Dorsolateral prefrontal cortex (tissue), 120 donors: ENCODE measurements at regions of chr14 and their contacts with region 1.

Region 1: GRCh38 chr14:96796851-96797581 is at the start of gene VRK1:
- DNase-seq: peak; percentile 95 to 99 (median 97)
- H3K4me3 ChIP-seq: peak within 1 kb of the TSS; percentile 64 to 93 (median 80)
- H3K27ac ChIP-seq: peak within 1 kb of the TSS in 15 of 59 donors; percentile 11 to 77 (median 51)
- H3K27me3 ChIP-seq: no peaks in the 10 kb centered on the region
- CTCF ChIP-seq: peak in 30 of 56 donors; percentile 7 to 59 (median 32)
- total RNA-seq, gene VRK1: 12.5 to 31.3 (median 20.6) TPM

Region 2: GRCh38 chr14:96744262-96744661 is 52.8 kb before region 1 on chr14:
- intact Hi-C with region 1: no loop called
- DNase-seq: no peak
- H3K4me3 ChIP-seq: no peak overlapping the region
- H3K27ac ChIP-seq: no peak overlapping the region
- H3K27me3 ChIP-seq: peaks cover 0 to 34% (median 9%) of the 10 kb centered on the region in 45 donors
- CTCF ChIP-seq: no peak

Region 3: GRCh38 chr14:96754845-96755184 is 42.2 kb before region 1 on chr14:
- intact Hi-C with region 1: loop called in 1 of 2 experiments (anchors 5 kb)
- DNase-seq: peak in 2 of 10 donors; percentile 29 to 52
- H3K4me3 ChIP-seq: peak overlapping the region in 4 of 59 donors; percentile 23 to 43 (median 28)
- H3K27ac ChIP-seq: peak overlapping the region in 52 of 59 donors; percentile 13 to 91 (median 78)
- H3K27me3 ChIP-seq: peaks cover 0 to 11% (median 0%) of the 10 kb centered on the region in 45 donors
- CTCF ChIP-seq: peak in 38 of 56 donors; percentile 14 to 63 (median 36)